ENCODE measurements at regions of chr9 and their contacts with region 1.

Region 1: GRCh38 chr9:97598461-97599288 is 34.5 kb downstream of the TSTD2 start:
- DNase-seq: peak; percentile 71
- H3K4me3 ChIP-seq: no peak overlapping the region
- H3K27ac ChIP-seq: peak overlapping the region in 1 of 2 experiments; percentile 58; a peak in 2 of 4 replicates
- H3K4me1 ChIP-seq: peaks cover 0 to 34% of the 10 kb centered on the region in 2 experiments; a peak in 2 of 4 replicates
- H3K27me3 ChIP-seq: no peaks in the 10 kb centered on the region
- CTCF ChIP-seq: peak; percentile 88
- EP300 ChIP-seq: no peak
- RAD21 ChIP-seq: peak; percentile 81

Region 2: DNA sequence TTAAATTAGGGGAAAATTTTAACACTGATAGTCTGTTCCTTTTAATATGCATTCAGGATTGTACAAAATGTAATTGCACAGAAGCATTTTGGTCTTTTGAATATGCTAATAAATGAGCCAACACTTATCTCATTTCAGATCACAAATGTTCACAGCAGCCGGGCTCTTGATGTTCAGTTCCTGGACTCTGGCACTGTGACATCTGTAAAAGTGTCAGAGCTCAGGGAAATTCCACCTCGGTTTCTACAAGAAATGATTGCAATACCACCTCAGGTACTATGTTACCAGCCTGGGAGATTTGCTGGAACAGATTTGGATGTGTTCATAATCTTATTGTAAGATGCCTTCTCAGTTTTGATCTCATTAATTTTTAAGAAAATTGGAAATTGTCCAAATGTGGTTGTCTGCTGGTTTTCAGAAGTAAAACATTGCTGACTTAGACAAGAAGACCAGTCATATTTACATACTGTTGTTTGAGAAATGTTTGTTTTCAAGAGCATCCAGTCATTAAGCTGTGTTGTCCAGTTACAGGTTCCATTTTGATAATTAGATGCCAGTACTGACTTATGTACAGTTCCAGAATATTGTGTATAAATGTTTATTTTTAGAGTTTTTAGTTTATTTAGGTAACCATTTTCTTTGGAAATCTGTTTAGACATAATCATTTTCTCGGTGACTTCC is 120.2 kb before region 1 on chr9:
- CTCF ChIA-PET with region 1: interaction called, 677 read pairs
- POLR2A ChIA-PET with region 1: no interaction called
- DNase-seq: no peak
- H3K4me3 ChIP-seq: no peak overlapping the region
- H3K27ac ChIP-seq: peak overlapping the region in 1 of 2 experiments; percentile 19; a peak in 1 of 4 replicates
- H3K4me1 ChIP-seq: peaks cover 0 to 26% of the 10 kb centered on the region in 2 experiments; a peak in 3 of 4 replicates
- H3K27me3 ChIP-seq: no peaks in the 10 kb centered on the region
- CTCF ChIP-seq: no peak
- EP300 ChIP-seq: no peak; a peak in 1 of 4 replicates
- RAD21 ChIP-seq: no peak

Region 3: DNA sequence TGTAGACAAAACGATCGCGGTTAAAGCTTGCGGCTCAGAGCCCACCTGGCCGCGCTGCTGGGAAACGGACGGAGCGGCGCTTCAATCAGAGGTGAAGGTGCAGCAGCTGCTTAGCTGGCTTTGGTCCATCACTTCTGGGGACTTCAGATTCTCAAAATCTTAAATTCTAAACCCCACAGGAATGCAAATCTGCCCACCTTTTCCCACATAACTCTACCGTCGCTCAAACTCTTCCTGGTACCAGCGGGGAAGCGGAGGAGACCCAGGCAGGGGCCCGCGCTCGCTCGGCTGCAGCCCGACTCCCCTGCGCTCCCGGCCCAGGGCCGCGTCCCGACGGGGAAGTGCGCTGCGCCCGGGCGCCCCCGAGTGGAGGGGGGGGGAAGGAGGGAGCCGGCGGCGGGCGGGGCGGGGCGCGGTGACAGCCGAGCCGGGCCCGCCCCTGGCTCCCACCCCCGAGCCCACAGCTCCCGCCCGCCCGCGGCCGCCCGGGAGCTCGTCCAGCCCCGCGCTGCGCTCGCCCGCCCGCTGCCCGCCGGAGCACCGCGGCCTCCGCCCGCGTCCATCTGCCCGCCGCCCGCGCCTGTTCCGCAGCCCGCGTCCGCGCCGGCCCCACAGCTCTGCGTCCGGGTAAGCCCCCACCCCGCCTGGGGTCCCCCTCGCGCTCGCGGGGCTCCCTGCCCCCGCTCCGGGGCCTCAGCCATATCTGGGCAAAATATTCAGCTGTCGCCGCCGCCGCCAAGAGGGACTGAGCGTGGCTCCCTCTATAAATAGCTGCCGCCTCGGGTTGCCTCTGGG is 97.3 kb before region 1 on chr9 and contains the start of gene TMOD1:
- CTCF ChIA-PET with region 1: interaction called, 67 read pairs
- POLR2A ChIA-PET with region 1: interaction called, 10 read pairs
- DNase-seq: peak; percentile 99
- H3K4me3 ChIP-seq: peak within 1 kb of the TSS; percentile 60 to 64
- H3K27ac ChIP-seq: peak within 1 kb of the TSS in 1 of 2 experiments; percentile 100; a peak in 2 of 4 replicates
- H3K4me1 ChIP-seq: peaks cover 0 to 29% of the 10 kb centered on the region in 2 experiments; a peak in 2 of 4 replicates
- H3K27me3 ChIP-seq: peaks cover 48% of the 10 kb centered on the region
- CTCF ChIP-seq: peak; percentile 23
- EP300 ChIP-seq: no peak
- RAD21 ChIP-seq: peak; percentile 25; the same call in 1 of the 2 replicates
- polyA plus RNA-seq, gene TMOD1: 0.54 and 1.6 TPM in 2 replicates

Region 4: DNA sequence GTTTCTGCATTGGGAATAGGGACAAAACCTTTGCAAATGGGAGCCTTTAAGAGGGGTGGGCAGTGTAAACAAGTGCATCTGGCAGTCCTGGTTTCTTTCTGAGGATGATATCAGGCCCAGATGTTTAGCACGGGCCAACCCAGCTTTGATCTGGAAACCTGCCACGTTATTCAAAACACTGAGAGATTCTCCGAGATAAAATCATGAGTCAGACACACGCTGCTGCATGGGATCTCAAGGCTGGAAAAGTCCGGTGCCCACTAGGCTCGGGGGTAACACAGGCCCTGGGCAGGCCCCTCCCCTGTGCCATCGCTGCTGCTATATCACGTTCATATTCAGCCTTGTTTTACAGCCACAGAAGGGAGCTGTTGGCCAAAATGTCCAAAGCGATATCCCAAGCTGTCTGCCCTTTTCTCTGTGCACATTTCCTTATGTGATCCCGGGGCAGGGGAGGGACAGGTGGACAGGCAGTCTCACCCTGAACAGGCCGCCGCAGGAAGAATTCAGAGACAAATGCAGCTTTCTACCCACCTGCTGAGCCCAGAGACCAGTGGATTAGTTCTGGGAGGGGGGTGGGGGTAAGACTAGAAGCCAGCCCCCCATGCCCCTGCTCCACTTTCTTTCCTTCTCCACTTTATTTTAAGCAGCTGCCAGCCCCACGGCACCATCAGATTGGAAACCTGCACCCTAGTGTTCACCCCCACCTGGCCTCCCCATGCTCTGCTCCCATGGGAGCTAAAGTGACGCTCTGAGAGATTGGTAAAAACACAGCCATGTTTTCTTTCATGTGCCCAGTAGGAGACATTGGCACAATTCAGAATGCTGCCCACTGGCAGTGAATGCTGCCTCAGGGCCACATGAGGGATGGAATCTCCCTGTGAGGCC is 34.1 kb before region 1 on chr9:
- CTCF ChIA-PET with region 1: interaction called, 101 read pairs
- POLR2A ChIA-PET with region 1: interaction called, 3 read pairs
- DNase-seq: peak; percentile 83
- H3K4me3 ChIP-seq: peak overlapping the region; percentile 10 to 16; a peak in 2 of 4 replicates
- H3K27ac ChIP-seq: peak overlapping the region in 1 of 2 experiments; percentile 98; a peak in 2 of 4 replicates
- H3K4me1 ChIP-seq: peaks cover 0 to 84% of the 10 kb centered on the region in 2 experiments; a peak in 2 of 4 replicates
- H3K27me3 ChIP-seq: no peaks in the 10 kb centered on the region
- CTCF ChIP-seq: no peak
- EP300 ChIP-seq: peak; percentile 15 to 97; a peak in 3 of 4 replicates
- RAD21 ChIP-seq: peak; percentile 57

Region 5: GRCh38 chr9:97615439-97616072 is 16.9 kb after region 1 on chr9:
- CTCF ChIA-PET with region 1: interaction called, 213 read pairs
- POLR2A ChIA-PET with region 1: interaction called, 5 read pairs
- DNase-seq: peak; percentile 61
- H3K4me3 ChIP-seq: no peak overlapping the region
- H3K27ac ChIP-seq: no peak overlapping the region; a peak in 1 of 4 replicates
- H3K4me1 ChIP-seq: no peaks in the 10 kb centered on the region
- H3K27me3 ChIP-seq: no peaks in the 10 kb centered on the region
- CTCF ChIP-seq: peak; percentile 85
- EP300 ChIP-seq: no peak
- RAD21 ChIP-seq: peak; percentile 87

Measured in SK-N-SH (cell line).